ENCODE measurements at regions of chr19 and their contacts with region 1.

Region 1: DNA sequence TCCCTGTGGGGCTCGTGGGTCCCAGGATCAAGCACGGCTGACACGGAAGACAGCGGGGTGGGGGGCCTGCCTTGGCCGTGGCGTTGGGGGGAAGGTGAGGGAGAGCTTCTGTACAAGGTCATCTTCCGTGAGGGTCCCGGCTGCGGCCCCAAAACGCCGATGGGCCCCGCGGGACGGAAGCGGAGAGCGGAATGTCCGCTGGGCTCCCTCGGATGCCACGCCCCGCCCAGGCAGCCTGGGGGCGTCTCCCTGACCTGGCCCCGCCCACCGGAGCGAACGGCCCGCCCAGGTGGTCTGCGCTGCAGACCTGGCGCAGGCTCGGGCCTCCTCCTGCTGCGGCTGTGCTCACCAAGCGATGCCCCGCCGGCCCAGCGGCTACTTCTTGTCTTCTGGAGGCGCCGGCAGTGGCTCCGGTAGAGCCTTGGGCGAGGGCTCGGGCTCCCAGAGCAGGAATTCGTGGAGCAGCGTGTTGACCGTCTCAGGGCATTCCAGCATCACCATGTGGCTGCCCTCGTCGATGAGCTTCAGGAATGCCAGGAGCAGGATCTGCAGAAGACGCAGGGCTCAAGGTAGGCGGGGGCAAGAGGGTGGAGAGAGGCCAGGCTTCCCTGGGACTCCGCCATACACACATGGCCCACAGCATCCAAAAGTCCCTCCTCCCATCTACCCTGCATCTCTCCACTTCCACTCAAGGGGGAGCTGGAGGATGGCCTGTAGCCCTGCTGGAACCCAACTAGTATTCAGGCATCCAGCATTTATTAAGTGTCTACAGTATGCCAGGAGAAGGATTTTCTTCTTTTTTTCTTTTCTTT is 10.7 kb downstream of the ABHD8 start:
- DNase-seq: peak; percentile 68 to 84 (median 73)
- ATAC-seq: peak; percentile 66 to 92 (median 90)
- H3K4me3 ChIP-seq: peak overlapping the region; percentile 24 to 73 (median 56)
- H3K27ac ChIP-seq: peak overlapping the region in 6 of 12 donors; percentile 39 to 81 (median 45)
- H3K4me1 ChIP-seq: peaks cover 0 to 13% (median 0%) of the 10 kb centered on the region in 12 donors
- H3K27me3 ChIP-seq: no peaks in the 10 kb centered on the region
- CTCF ChIP-seq: peak; percentile 46 to 78 (median 62)
- POLR2A ChIP-seq: no peak

Region 2: GRCh38 chr19:17351815-17352435 is 59.4 kb after region 1 on chr19:
- intact Hi-C with region 1: no loop called
- DNase-seq: no peak
- ATAC-seq: no peak
- H3K4me3 ChIP-seq: no peak overlapping the region
- H3K27ac ChIP-seq: no peak overlapping the region
- H3K4me1 ChIP-seq: peaks cover 0 to 49% (median 33%) of the 10 kb centered on the region in 12 donors
- H3K27me3 ChIP-seq: no peaks in the 10 kb centered on the region
- CTCF ChIP-seq: no peak
- POLR2A ChIP-seq: no peak

Region 3: GRCh38 chr19:17390665-17391370 is 98.3 kb after region 1 on chr19:
- intact Hi-C with region 1: loop called in 8 of 10 experiments (anchors 2 to 10 kb)
- DNase-seq: peak; percentile 93 to 96 (median 94)
- ATAC-seq: peak; percentile 91 to 99 (median 98)
- H3K4me3 ChIP-seq: peak overlapping the region; percentile 8 to 70 (median 50)
- H3K27ac ChIP-seq: peak overlapping the region in 4 of 12 donors; percentile 3 to 28 (median 7)
- H3K4me1 ChIP-seq: peaks cover 2 to 44% (median 17%) of the 10 kb centered on the region in 12 donors
- H3K27me3 ChIP-seq: peaks cover 0 to 16% (median 7%) of the 10 kb centered on the region in 9 donors
- CTCF ChIP-seq: peak; percentile 45 to 88 (median 79)
- POLR2A ChIP-seq: peak in 1 of 2 donors; percentile 36

Measured in heart left ventricle (tissue), 16 donors.